OCI-LY7 (cell line): ENCODE measurements at regions of chr5 and their contacts with region 1.

Region 1: DNA sequence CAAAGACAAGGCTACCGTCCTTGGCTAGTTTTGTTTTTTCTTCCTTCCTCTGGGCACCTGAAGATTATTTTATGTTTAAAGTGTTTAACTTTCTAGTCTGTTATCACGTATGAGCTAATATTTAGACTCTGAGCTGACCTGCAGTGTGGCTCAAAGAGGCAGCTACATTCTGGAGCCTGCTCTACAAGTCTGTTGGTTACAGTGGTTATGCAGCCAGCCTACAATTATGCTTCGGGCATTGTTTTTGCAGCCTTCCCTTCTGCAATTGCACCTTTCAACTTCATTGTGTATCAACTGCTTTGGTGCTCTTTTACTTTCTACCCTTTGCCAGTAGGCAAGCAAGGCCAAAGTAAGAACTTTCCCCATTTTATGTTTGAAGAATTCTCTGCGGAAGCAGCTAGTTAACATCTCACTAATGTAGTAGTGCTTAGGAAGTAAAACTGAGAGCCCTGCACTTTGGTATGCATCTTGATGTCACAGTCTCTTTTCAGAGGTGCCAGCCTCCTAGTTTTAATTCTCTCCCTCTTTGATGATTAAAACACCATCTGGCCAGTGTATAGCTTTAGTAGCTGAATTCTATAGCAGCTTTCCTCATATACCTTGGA is 322.1 kb downstream of the FAM170A start:
- DNase-seq: no peak
- H3K4me3 ChIP-seq: no peak overlapping the region
- H3K27ac ChIP-seq: no peak overlapping the region
- H3K4me1 ChIP-seq: no peaks in the 10 kb centered on the region
- CTCF ChIP-seq: no peak

Region 2: GRCh38 chr5:119876522-119876921 is 74.9 kb before region 1 on chr5:
- CTCF ChIA-PET with region 1: no interaction called
- POLR2A ChIA-PET with region 1: no interaction called
- intact Hi-C with region 1: no loop called
- DNase-seq: no peak
- H3K4me3 ChIP-seq: no peak overlapping the region
- H3K27ac ChIP-seq: no peak overlapping the region
- H3K4me1 ChIP-seq: no peaks in the 10 kb centered on the region
- CTCF ChIP-seq: no peak

Region 3: DNA sequence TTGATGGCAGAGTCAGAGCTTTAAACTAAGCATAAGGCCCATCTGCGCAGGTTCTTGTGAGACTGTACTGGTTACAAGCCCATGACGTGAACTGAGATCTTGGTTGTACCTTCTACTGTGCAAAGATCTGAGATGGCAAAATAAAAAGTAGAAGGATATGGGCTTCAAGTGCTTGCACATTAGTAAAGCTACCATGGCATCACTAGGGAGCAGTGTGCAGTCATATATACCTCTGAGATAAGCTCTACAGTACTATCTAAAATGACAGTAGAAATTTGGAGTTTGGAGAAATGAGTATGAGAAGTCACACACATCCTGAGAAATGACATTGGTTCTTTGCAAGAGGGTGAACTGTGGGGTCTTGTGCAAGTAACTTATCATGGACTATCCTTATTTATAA is 104.4 kb after region 1 on chr5:
- CTCF ChIA-PET with region 1: no interaction called
- POLR2A ChIA-PET with region 1: no interaction called
- intact Hi-C with region 1: no loop called
- DNase-seq: no peak
- H3K4me3 ChIP-seq: no peak overlapping the region
- H3K27ac ChIP-seq: no peak overlapping the region
- H3K4me1 ChIP-seq: no peaks in the 10 kb centered on the region
- CTCF ChIP-seq: 0 out of 2 replicates have a peak, but pooled peaks have one; percentile 22

Region 4: GRCh38 chr5:120873083-120873482 is 921.7 kb after region 1 on chr5:
- CTCF ChIA-PET with region 1: no interaction called
- POLR2A ChIA-PET with region 1: interaction called, 13 read pairs
- intact Hi-C with region 1: no loop called
- DNase-seq: no peak
- H3K4me3 ChIP-seq: no peak overlapping the region
- H3K27ac ChIP-seq: no peak overlapping the region
- H3K4me1 ChIP-seq: no peaks in the 10 kb centered on the region
- CTCF ChIP-seq: no peak